Tibial artery (tissue), 4 donors: ENCODE measurements at regions of chr18 and their contacts with region 1.

Region 1: DNA sequence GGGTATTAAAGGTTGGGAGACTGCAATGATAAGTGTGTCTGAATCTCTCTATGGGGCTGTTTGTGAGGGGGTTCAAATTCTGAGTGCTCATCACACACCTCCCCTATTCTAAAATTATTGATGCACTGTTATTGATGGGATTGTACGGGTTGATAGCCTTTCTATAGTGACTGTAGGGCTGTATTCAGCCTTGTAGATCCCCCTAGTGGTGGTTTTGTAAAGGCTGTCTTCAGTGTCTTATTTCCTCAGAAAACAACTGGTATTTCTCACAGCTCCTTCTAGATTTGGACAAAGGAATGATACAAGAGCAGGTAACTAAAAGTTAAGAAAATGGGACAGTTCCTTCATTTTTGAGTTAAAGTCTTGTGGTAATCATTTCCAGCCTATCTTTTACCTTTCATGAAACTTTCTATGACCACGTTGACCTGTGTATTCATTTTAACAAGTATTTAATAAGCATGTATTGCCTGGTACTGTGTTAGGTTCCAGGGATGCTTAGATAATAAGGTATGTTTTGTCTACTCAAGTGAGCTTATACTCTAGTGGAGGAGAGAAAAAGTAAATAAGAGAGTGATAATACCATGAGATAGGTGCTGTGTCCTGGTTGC is 21.2 kb downstream of the SMAD4 start:
- DNase-seq: no peak
- H3K4me3 ChIP-seq: no peak overlapping the region
- H3K27ac ChIP-seq: no peak overlapping the region
- H3K4me1 ChIP-seq: peaks cover 0 to 22% (median 0%) of the 10 kb centered on the region in 4 donors
- H3K27me3 ChIP-seq: no peaks in the 10 kb centered on the region
- CTCF ChIP-seq: peak; percentile 62 to 71

Region 2: DNA sequence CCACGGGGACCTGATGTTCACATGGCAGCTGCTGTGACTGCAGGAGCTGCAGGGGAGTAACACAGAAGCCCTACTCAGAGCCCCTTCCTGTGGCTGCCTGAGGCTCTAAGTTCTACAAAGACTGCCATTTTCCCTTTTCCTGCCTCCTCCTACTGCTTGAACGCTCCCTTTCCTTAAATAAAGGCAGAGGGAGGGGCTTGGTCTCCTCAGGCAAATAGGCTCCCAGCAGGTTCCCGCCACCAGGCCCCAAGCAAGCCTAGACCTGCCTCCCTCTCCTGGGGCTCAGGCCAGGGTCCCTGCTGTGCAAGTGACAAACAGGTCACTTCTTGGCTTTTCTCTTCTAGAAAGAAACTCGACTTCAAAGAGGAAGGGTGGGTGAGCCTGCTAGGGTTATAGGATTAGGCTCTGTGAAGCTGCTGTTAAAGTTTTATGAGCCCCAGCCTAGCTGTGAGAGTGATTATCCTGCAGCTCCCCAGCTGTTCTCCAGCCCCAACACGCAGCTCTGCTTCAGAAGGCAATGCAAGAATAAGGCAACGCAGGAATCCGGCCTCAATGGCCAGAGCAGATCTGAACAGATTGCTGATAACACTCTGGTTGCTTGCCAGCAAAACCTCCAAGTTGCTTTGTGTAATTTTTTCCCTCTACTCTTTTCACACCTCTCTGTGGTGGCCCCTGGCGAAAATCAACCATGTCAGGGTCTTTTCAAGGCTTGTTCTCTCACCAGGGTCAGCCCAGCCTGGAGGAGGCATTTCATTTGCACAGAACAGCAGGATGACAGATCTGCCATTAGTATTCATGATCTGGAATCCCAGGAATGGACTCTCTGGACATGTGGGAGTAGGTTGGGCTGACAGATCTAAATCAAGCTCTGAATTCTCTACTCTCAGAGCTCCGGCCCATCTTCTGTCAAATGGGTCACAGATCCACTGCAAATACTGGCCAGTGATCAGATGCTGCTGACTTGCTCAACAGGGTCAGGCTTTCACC is 302.7 kb before region 1 on chr18:
- intact Hi-C with region 1: no loop called
- DNase-seq: no peak
- H3K4me3 ChIP-seq: no peak overlapping the region
- H3K27ac ChIP-seq: no peak overlapping the region
- H3K4me1 ChIP-seq: no peaks in the 10 kb centered on the region
- H3K27me3 ChIP-seq: peaks cover 0 to 2% of the 10 kb centered on the region in 2 donors
- CTCF ChIP-seq: no peak

Region 3: GRCh38 chr18:50819728-50820378 is 231.4 kb before region 1 on chr18 and contains the start of gene MRO:
- intact Hi-C with region 1: loop called (anchors 5 kb)
- DNase-seq: peak; percentile 85
- H3K4me3 ChIP-seq: peak within 1 kb of the TSS; percentile 30 to 39
- H3K27ac ChIP-seq: no peak within 1 kb of the TSS
- H3K4me1 ChIP-seq: peaks cover 0 to 16% (median 7%) of the 10 kb centered on the region in 4 donors
- H3K27me3 ChIP-seq: no peaks in the 10 kb centered on the region
- CTCF ChIP-seq: peak; percentile 74 to 85

Region 4: GRCh38 chr18:50866765-50867164 is 184.4 kb before region 1 on chr18:
- intact Hi-C with region 1: no loop called
- DNase-seq: no peak
- H3K4me3 ChIP-seq: no peak overlapping the region
- H3K27ac ChIP-seq: no peak overlapping the region
- H3K4me1 ChIP-seq: no peaks in the 10 kb centered on the region
- H3K27me3 ChIP-seq: no peaks in the 10 kb centered on the region
- CTCF ChIP-seq: peak in 1 of 2 experiments; percentile 7